Panc1 (cell line): ENCODE measurements at regions of chr6 and their contacts with region 1.

Region 1: GRCh38 chr6:86856937-86857563 is 80.3 kb upstream of the HTR1E start:
- DNase-seq: peak; percentile 17
- ATAC-seq: no peak
- H3K4me3 ChIP-seq: no peak overlapping the region
- H3K27ac ChIP-seq: no peak overlapping the region
- H3K4me1 ChIP-seq: no peaks in the 10 kb centered on the region
- H3K27me3 ChIP-seq: no peaks in the 10 kb centered on the region
- CTCF ChIP-seq: peak; percentile 77; the same call in 1 of the 2 replicates

Region 2: DNA sequence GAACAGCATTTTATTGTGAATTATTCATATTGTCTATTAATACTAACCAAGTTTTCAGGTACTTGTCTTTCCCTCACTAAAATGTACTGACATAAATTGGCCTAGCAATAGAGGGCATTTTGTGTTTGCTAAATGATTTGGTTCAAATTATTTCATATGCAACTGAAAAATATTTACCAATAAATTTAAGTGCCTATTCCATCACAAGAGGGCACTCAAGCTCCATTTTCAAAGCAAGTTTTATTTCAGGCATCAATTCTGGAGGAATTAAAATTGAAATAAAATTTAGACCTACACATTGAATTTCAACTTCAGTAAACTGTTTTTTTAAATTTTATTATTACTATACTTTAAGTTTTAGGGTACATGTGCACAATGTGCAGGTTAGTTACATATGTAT is 1100.1 kb before region 1 on chr6:
- CTCF ChIA-PET with region 1: no interaction called
- POLR2A ChIA-PET with region 1: no interaction called
- in situ Hi-C with region 1: no loop called
- intact Hi-C with region 1: loop called (anchors 5 kb)
- DNase-seq: peak; percentile 5
- ATAC-seq: no peak
- H3K4me3 ChIP-seq: no peak overlapping the region
- H3K27ac ChIP-seq: no peak overlapping the region
- H3K4me1 ChIP-seq: no peaks in the 10 kb centered on the region; the same call in 1 of the 2 replicates
- H3K27me3 ChIP-seq: no peaks in the 10 kb centered on the region
- CTCF ChIP-seq: peak; percentile 69; the same call in 1 of the 2 replicates

Region 3: DNA sequence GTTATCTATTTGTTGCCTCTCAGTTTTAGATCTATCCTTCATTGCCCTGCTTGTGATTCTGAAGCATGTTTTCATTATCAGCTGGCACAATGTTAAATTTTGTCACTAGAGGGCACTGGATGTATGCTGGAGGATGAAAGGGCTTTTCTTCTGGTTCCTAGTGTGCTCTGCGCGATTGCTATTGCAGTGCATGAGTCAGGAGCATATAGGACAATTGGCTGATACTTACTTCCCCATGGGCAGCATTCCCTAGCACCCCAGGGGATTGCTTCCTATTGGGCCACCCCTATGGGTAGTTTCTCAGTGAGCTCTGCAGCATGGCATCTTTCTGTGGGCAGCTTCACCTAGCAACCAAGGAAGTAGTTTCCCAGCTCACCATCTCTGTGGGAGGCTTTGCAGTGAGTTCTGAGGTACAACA is 934.0 kb before region 1 on chr6:
- CTCF ChIA-PET with region 1: no interaction called
- POLR2A ChIA-PET with region 1: no interaction called
- in situ Hi-C with region 1: no loop called
- intact Hi-C with region 1: loop called (anchors 5 kb)
- DNase-seq: peak; percentile 45
- ATAC-seq: peak; percentile 95
- H3K4me3 ChIP-seq: no peak overlapping the region
- H3K27ac ChIP-seq: no peak overlapping the region
- H3K4me1 ChIP-seq: no peaks in the 10 kb centered on the region
- H3K27me3 ChIP-seq: no peaks in the 10 kb centered on the region
- CTCF ChIP-seq: peak; percentile 86

Region 4: GRCh38 chr6:86937219-86938079 is 80.4 kb after region 1 on chr6 and contains the start of gene HTR1E:
- CTCF ChIA-PET with region 1: interaction called, 3 read pairs
- POLR2A ChIA-PET with region 1: no interaction called
- in situ Hi-C with region 1: no loop called
- intact Hi-C with region 1: loop called (anchors 5 kb)
- DNase-seq: no peak
- ATAC-seq: peak; percentile 97
- H3K4me3 ChIP-seq: peak within 1 kb of the TSS; percentile 34 to 47
- H3K27ac ChIP-seq: no peak within 1 kb of the TSS
- H3K4me1 ChIP-seq: no peaks in the 10 kb centered on the region; the same call in 1 of the 2 replicates
- H3K27me3 ChIP-seq: peaks cover 28% of the 10 kb centered on the region
- CTCF ChIP-seq: peak; percentile 85
- total RNA-seq, gene HTR1E: not detected

Region 5: DNA sequence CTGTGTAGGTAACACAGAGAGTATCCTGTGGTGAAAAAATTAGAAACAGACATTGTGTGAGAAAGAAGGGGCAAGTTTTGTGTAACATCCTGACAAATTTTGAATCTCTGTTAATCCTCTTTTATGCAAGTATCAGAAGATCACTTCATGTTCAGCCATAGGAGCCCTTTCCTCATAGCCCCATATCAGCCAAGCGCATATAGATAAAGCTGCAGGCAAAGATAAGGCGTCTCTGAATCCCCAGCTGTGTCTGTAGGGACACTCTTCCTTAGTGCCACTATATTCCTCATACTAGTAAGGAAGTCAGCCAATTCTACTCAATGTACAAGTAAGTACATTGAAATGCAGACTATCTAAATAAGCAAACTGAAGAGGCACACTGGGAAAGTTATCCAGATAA is 102.6 kb after region 1 on chr6:
- CTCF ChIA-PET with region 1: no interaction called
- POLR2A ChIA-PET with region 1: no interaction called
- in situ Hi-C with region 1: no loop called
- intact Hi-C with region 1: no loop called
- DNase-seq: no peak
- ATAC-seq: no peak
- H3K4me3 ChIP-seq: no peak overlapping the region
- H3K27ac ChIP-seq: no peak overlapping the region
- H3K4me1 ChIP-seq: no peaks in the 10 kb centered on the region
- H3K27me3 ChIP-seq: no peaks in the 10 kb centered on the region; the same call in 1 of the 2 replicates
- CTCF ChIP-seq: no peak

Region 6: DNA sequence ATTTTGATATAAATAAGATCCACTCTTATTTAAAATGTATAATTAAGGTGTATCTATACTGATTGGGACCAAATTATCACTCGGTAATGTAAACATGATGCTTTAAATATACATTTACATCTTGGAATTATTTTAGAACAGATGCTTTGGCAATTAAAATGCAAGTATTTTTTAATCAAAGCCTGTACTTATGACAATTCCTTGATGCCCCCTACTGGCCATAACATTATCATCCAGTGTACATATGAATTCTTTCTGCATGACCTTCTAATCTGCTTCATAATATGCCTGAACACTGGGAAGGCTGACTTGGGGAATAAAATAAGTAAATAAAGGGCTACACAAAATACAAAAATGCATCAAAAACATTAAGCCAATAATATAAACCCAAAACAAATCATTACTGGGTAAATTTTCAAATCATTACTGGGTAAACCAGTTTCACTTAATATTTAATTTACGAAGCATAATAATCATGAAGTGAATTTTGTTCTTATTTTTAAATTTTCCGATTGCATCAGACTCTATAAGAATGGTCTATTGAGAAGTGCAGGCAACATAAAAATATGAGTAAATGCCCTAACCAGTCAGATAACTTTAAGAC is 172.8 kb after region 1 on chr6:
- CTCF ChIA-PET with region 1: no interaction called
- POLR2A ChIA-PET with region 1: no interaction called
- in situ Hi-C with region 1: no loop called
- intact Hi-C with region 1: loop called (anchors 5 kb)
- DNase-seq: peak; percentile 24
- ATAC-seq: peak; percentile 84
- H3K4me3 ChIP-seq: no peak overlapping the region
- H3K27ac ChIP-seq: no peak overlapping the region
- H3K4me1 ChIP-seq: no peaks in the 10 kb centered on the region
- H3K27me3 ChIP-seq: no peaks in the 10 kb centered on the region
- CTCF ChIP-seq: peak; percentile 73; the same call in 1 of the 2 replicates